Esophagus muscularis mucosa (tissue), 4 donors: ENCODE measurements at regions of chr7 and their contacts with region 1.

Region 1: GRCh38 chr7:55572378-55573233 is at the start of gene VOPP1:
- DNase-seq: no peak
- H3K4me3 ChIP-seq: peak within 1 kb of the TSS; percentile 75 to 97 (median 95)
- H3K27ac ChIP-seq: peak within 1 kb of the TSS; percentile 87 to 94 (median 90)
- H3K4me1 ChIP-seq: peaks cover 44 to 56% (median 52%) of the 10 kb centered on the region in 4 donors
- H3K27me3 ChIP-seq: no peaks in the 10 kb centered on the region
- CTCF ChIP-seq: no peak
- EP300 ChIP-seq: no peak
- POLR2A ChIP-seq: no peak
- total RNA-seq, gene VOPP1: 23.7 to 42.1 (median 37.5) TPM

Region 2: DNA sequence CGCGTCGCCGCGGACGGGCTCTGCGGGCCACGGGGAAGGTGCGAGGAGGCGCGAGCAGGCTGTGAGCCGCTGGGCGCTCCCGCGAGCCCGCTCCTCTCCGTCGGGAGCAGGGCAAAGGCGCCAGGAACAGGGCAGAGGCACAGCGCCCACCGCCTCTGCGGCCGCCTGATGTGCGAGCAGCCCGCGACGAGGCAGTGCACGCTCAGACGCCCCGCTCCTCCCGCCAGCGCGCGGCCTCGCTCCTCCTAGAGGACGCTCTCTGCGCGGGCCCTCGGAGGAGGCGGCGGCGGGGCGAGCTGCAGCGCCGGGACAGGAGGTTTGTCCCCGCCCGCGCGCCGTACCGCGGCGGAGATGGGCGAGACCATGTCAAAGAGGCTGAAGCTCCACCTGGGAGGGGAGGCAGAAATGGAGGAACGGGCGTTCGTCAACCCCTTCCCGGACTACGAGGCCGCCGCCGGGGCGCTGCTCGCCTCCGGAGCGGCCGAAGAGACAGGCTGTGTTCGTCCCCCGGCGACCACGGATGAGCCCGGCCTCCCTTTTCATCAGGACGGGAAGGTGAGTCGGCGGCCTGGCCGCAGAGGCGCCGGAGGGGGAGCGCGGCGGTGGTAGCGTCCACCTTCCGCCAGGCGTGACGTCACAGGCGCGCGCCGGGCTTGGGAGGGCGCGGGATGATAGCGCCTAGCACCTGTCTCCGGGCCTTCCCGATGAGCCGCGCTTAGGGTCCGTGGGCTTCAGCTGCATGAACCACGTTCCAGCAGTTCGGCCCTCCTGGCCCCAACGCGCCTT is 206.7 kb before region 1 on chr7:
- intact Hi-C with region 1: loop called (anchors 10 kb)
- DNase-seq: peak; percentile 98
- H3K4me3 ChIP-seq: peak overlapping the region; percentile 76 to 95 (median 84)
- H3K27ac ChIP-seq: peak overlapping the region; percentile 94 to 97 (median 96)
- H3K4me1 ChIP-seq: peaks cover 19 to 25% (median 21%) of the 10 kb centered on the region in 4 donors
- H3K27me3 ChIP-seq: no peaks in the 10 kb centered on the region
- CTCF ChIP-seq: peak; percentile 16 to 35 (median 27)
- EP300 ChIP-seq: no peak
- POLR2A ChIP-seq: peak; percentile 34

Region 3: DNA sequence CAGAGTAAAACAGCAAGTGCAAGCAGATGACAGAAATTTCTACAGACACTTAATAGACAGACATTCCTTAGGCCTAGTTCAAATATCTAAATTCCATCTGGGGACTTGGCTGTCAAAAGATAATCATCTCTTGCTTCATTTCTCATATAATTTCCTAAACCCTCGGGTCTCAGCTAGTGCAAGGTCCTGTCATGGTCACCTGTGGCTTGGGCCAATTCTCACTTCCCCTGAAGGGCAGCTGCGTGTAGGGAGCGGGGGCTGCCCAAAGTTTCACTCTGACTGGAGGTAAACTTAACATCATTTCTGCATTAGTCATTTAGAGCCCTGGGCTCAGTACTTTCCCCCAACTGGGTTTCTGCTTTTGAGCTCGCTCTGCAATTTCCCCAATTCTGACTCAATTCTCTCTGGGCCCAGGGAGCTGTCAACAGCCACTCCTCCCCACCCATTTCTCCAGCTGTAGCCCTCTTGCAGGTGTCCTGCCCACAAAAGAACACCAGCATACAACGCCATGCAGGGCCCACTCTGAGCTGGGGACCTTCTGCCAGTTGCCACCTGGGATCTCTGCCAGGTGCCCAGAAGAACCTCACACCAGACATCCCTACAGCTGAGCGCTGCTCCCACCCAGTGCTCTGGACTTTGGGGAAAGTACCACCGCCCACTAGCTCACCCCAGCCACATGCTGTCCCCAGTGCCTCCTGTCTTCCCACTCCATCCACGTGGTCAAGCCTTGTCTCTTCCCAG is 38.3 kb before region 1 on chr7:
- intact Hi-C with region 1: loop called (anchors 5 kb)
- DNase-seq: no peak
- H3K4me3 ChIP-seq: no peak overlapping the region
- H3K27ac ChIP-seq: peak overlapping the region; percentile 27 to 55 (median 46)
- H3K4me1 ChIP-seq: peaks cover 36 to 64% (median 60%) of the 10 kb centered on the region in 4 donors
- H3K27me3 ChIP-seq: no peaks in the 10 kb centered on the region
- CTCF ChIP-seq: no peak
- EP300 ChIP-seq: no peak
- POLR2A ChIP-seq: no peak